ENCODE measurements at regions of chr12 and their contacts with region 1.

Region 1: DNA sequence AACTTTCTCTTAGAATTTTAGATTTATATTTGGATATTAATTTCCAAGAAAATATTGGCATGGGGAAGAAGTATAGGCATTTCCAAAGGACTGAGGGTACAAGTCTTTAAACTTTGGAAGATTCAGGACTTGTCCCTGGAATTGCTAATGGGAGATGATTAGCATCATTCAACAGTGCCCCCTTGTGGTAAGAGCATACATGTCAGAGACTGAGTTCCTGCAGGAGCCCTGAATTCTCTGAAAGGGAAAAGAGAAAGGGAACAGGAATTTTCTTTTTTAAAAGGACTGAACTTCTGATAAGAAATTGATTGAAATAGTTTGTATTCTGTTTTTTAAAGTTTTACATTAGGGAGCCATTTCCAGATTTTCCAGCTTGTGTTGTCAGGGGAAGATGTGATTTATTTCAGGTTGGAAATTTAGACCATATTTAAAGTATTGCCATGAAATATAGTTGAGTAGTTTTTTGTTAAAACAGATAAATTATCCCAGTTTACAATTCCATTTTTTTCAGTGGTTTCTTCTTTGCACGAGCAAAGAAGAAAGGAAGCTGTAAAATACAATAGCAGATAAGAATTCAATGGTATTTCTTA is 44.0 kb upstream of the REP15 start:
- DNase-seq: peak in 6 of 9 donors; percentile 26 to 53 (median 32)
- ATAC-seq: peak; percentile 65
- H3K4me3 ChIP-seq: no peak overlapping the region
- H3K4me3 Mint-ChIP-seq: no peak overlapping the region
- H3K27ac ChIP-seq: no peak overlapping the region
- H3K27ac Mint-ChIP-seq: no peak overlapping the region
- H3K4me1 ChIP-seq: no peaks in the 10 kb centered on the region
- H3K4me1 Mint-ChIP-seq: peaks cover 0 to 24% (median 0%) of the 10 kb centered on the region in 7 donors
- H3K27me3 ChIP-seq: no peaks in the 10 kb centered on the region
- H3K27me3 Mint-ChIP-seq: no peaks in the 10 kb centered on the region

Region 2: DNA sequence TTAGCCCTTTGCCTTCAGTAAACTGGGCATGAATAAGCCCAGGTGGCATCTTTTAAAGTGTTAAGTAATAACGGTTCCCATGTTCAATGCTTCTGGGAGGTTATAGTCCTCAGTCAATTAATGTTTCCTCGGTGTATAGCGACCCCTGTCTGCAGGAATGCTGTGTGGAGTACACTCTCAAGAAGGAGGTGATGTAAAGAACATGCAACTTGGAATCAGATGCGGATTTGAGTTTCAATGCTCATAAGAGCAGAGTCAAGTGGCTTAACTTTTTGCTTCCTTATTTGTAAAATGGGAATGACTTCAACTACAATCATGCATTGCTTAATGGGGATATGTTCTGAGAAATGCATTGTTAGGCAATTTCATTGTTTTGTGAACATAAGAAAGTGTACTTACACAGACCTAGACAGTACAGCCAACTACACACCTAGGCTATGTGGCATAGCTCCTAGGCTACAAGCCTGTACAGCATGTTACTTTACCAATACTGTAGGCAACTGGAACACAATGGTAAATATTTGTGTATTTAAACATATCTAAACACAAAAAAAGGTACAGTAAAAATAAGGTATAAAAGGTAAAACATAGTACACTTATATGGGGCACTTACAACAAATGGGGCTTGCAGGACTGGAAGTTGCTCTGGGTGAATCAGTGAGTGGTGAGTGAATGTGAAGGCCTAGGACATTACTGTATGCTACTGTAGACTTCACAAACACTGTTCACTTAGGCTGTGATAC is 51.6 kb after region 1 on chr12:
- CTCF ChIA-PET with region 1: no interaction called
- POLR2A ChIA-PET with region 1: no interaction called
- intact Hi-C with region 1: loop called (anchors 1 to 5 kb)
- DNase-seq: peak; percentile 11 to 64 (median 56)
- ATAC-seq: peak; percentile 97
- H3K4me3 ChIP-seq: no peak overlapping the region
- H3K4me3 Mint-ChIP-seq: no peak overlapping the region
- H3K27ac ChIP-seq: no peak overlapping the region
- H3K27ac Mint-ChIP-seq: no peak overlapping the region
- H3K4me1 ChIP-seq: no peaks in the 10 kb centered on the region
- H3K4me1 Mint-ChIP-seq: peaks cover 0 to 3% (median 0%) of the 10 kb centered on the region in 7 donors
- H3K27me3 ChIP-seq: no peaks in the 10 kb centered on the region
- H3K27me3 Mint-ChIP-seq: peaks cover 7 to 22% (median 13%) of the 10 kb centered on the region in 5 donors

Region 3: GRCh38 chr12:27794818-27795584 is 142.7 kb after region 1 on chr12:
- CTCF ChIA-PET with region 1: no interaction called
- POLR2A ChIA-PET with region 1: no interaction called
- intact Hi-C with region 1: no loop called
- DNase-seq: no peak
- ATAC-seq: no peak
- H3K4me3 ChIP-seq: no peak overlapping the region
- H3K4me3 Mint-ChIP-seq: no peak overlapping the region
- H3K27ac ChIP-seq: no peak overlapping the region
- H3K27ac Mint-ChIP-seq: peak overlapping the region in 8 of 9 donors; percentile 4 to 79 (median 50)
- H3K4me1 ChIP-seq: no peaks in the 10 kb centered on the region
- H3K4me1 Mint-ChIP-seq: peaks cover 0 to 27% (median 5%) of the 10 kb centered on the region in 7 donors
- H3K27me3 ChIP-seq: no peaks in the 10 kb centered on the region
- H3K27me3 Mint-ChIP-seq: no peaks in the 10 kb centered on the region

Region 4: DNA sequence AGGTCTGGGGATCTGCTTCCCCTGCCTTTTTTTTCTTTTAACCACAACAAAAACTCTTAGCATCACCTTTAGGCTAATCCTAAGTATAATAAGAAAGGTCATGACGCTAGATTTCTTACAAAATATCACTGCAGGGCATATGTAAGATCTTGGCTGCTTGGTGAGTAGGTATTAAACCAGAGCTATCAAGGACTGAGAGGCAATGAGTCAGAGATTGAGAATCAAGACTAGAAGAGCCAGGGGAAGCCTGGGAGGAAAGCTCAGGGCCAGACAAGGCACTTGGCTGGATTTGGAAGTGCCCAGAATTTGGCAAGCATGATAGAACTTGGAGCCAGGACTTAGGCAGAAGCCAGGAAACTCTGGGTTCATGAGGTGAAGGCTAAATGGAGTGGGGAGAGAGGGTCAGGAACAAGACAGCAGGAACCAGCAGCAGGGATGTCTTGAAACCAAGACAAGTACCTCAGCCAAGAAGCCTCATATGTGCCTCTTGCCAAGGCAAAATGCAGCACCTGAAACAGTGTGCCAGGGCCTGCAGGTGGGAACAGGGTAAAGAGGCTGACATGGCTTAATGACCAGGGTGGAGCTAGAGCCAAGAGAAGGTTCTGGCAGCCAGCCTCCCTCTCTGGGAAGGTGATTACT is 270.4 kb after region 1 on chr12:
- CTCF ChIA-PET with region 1: no interaction called
- POLR2A ChIA-PET with region 1: no interaction called
- intact Hi-C with region 1: no loop called
- DNase-seq: no peak
- ATAC-seq: no peak
- H3K4me3 ChIP-seq: no peak overlapping the region
- H3K4me3 Mint-ChIP-seq: no peak overlapping the region
- H3K27ac ChIP-seq: no peak overlapping the region
- H3K27ac Mint-ChIP-seq: no peak overlapping the region
- H3K4me1 ChIP-seq: no peaks in the 10 kb centered on the region
- H3K4me1 Mint-ChIP-seq: no peaks in the 10 kb centered on the region
- H3K27me3 ChIP-seq: no peaks in the 10 kb centered on the region
- H3K27me3 Mint-ChIP-seq: peaks cover 4 to 46% (median 12%) of the 10 kb centered on the region in 5 donors

Measured in naive thymus-derived CD4-positive, alpha-beta T cell (primary cell).